ENCODE measurements at regions of chr10 and their contacts with region 1.

Region 1: DNA sequence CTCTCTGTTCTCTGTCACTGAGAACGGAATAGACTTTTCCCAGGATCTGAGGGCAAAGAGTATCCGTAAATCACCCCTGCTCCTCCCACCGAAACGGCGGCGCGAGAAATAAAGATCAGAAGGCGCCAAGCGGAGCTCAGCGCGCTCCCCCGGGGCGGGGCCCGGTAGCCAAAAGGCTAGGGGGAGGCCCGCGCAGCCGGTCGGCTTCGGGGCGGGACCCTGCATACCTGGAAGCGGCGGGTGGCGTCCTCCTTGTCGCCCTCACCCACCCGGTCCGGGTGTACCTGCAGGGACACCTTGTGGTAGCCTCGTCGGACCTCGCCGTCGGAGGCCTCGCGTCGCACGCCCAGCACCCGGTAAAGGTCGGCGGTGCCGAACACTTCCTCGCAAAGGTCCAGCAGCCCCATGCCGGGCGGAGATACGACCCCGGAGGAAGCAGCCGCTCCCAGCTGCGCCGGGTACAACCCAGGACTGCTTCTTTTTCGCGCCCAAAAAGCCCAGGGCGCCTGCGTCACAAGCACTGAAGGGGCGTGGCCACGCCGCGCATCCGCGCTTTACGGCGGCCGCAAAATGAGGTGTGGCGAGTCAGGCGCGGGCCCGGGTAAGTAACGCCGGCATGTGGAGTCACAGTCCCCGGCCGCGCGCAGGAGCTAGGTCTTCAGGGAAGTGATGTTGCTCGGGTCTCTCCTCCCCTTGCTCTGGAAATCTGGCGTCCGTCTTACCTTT is at the start of gene DNAJC9:
- DNase-seq: peak; percentile 97
- H3K4me3 ChIP-seq: peak within 1 kb of the TSS; percentile 82
- H3K27ac ChIP-seq: peak within 1 kb of the TSS; percentile 98
- H3K4me1 ChIP-seq: peaks cover 25% of the 10 kb centered on the region
- H3K27me3 ChIP-seq: no peaks in the 10 kb centered on the region
- CTCF ChIP-seq: no peak
- total RNA-seq, gene DNAJC9: 69.1 and 72.9 TPM in 2 replicates

Region 2: GRCh38 chr10:73117976-73118743 is 128.8 kb before region 1 on chr10:
- CTCF ChIA-PET with region 1: no interaction called
- POLR2A ChIA-PET with region 1: no interaction called
- intact Hi-C with region 1: no loop called
- DNase-seq: peak; percentile 29
- H3K4me3 ChIP-seq: no peak overlapping the region
- H3K27ac ChIP-seq: no peak overlapping the region
- H3K4me1 ChIP-seq: no peaks in the 10 kb centered on the region
- H3K27me3 ChIP-seq: no peaks in the 10 kb centered on the region
- CTCF ChIP-seq: no peak

Region 3: GRCh38 chr10:73131301-73131700 is 115.6 kb before region 1 on chr10:
- CTCF ChIA-PET with region 1: no interaction called
- POLR2A ChIA-PET with region 1: interaction called, 15 read pairs
- intact Hi-C with region 1: no loop called
- DNase-seq: peak; percentile 64
- H3K4me3 ChIP-seq: no peak overlapping the region
- H3K27ac ChIP-seq: no peak overlapping the region
- H3K4me1 ChIP-seq: peaks cover 9% of the 10 kb centered on the region
- H3K27me3 ChIP-seq: no peaks in the 10 kb centered on the region
- CTCF ChIP-seq: no peak

Region 4: GRCh38 chr10:73167783-73168464 is 79.0 kb before region 1 on chr10 and contains the starts of genes ECD and FAM149B1:
- CTCF ChIA-PET with region 1: no interaction called
- POLR2A ChIA-PET with region 1: no interaction called
- intact Hi-C with region 1: no loop called
- DNase-seq: peak; percentile 97
- H3K4me3 ChIP-seq: peak within 1 kb of the TSS; percentile 89
- H3K27ac ChIP-seq: peak within 1 kb of the TSS; percentile 95
- H3K4me1 ChIP-seq: no peaks in the 10 kb centered on the region
- H3K27me3 ChIP-seq: no peaks in the 10 kb centered on the region
- CTCF ChIP-seq: no peak
- total RNA-seq, gene ECD: 37.3 and 37.4 TPM in 2 replicates
- total RNA-seq, gene FAM149B1: 10.9 and 13.4 TPM in 2 replicates

Region 5: DNA sequence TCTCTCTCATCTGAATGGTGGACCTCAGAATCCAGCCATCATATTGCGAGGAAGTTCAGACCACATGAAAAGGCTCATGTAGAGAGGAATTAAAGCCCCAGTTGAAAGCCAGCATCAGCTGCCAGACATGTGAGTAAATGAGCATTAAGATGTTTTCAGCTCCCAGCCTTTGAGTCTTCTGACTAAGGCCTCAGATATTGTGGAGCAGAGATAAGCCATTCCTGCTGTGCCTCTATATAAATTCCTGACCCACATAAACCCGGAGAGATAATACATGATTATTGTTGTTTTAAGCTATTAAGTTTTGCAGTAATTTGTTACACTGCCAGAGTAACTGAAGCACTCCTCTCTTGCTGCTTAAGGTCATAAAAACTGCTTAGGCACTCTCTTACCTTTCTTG is 64.4 kb before region 1 on chr10:
- CTCF ChIA-PET with region 1: no interaction called
- POLR2A ChIA-PET with region 1: no interaction called
- intact Hi-C with region 1: no loop called
- DNase-seq: peak; percentile 19
- H3K4me3 ChIP-seq: no peak overlapping the region
- H3K27ac ChIP-seq: no peak overlapping the region
- H3K4me1 ChIP-seq: no peaks in the 10 kb centered on the region
- H3K27me3 ChIP-seq: no peaks in the 10 kb centered on the region
- CTCF ChIP-seq: no peak

Region 6: GRCh38 chr10:73413528-73414229 is 166.7 kb after region 1 on chr10 and contains the start of gene ANXA7:
- CTCF ChIA-PET with region 1: no interaction called
- POLR2A ChIA-PET with region 1: no interaction called
- intact Hi-C with region 1: loop called (anchors 5 kb)
- DNase-seq: peak; percentile 95
- H3K4me3 ChIP-seq: peak within 1 kb of the TSS; percentile 97
- H3K27ac ChIP-seq: peak within 1 kb of the TSS; percentile 96
- H3K4me1 ChIP-seq: peaks cover 7% of the 10 kb centered on the region
- H3K27me3 ChIP-seq: no peaks in the 10 kb centered on the region
- CTCF ChIP-seq: peak; percentile 29; the same call in 1 of the 2 replicates
- total RNA-seq, gene ANXA7: 151 and 156 TPM in 2 replicates

Region 7: GRCh38 chr10:74328388-74328787 is 1081.4 kb after region 1 on chr10:
- CTCF ChIA-PET with region 1: no interaction called
- POLR2A ChIA-PET with region 1: no interaction called
- intact Hi-C with region 1: no loop called
- DNase-seq: no peak
- H3K4me3 ChIP-seq: no peak overlapping the region
- H3K27ac ChIP-seq: no peak overlapping the region
- H3K4me1 ChIP-seq: peaks cover 9% of the 10 kb centered on the region
- H3K27me3 ChIP-seq: no peaks in the 10 kb centered on the region
- CTCF ChIP-seq: no peak

Measured in A673 (cell line).